MCF 10A (cell line): ENCODE measurements at regions of chr16 and their contacts with region 1.

Region 1: DNA sequence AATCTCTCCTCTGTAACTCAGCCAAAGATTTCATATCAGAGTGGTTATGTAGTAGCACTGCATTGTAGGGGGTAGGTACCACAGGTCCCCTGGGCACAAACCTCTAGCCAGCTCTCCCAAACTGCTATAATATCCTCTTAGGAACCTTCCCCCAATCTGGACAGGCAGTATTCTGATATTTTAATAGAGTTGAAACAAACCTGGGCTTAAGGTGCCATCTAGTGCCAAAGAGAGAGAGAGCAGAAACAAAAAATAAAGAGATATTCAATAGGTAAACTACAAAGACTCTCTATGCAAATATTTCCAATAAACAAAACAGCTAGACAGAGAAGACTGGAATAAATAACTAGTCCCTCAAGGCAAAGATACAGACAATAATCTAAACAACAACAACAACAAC is 1070.0 kb downstream of the CDH11 start:
- DNase-seq: peak; percentile 42
- H3K4me3 Mint-ChIP-seq: no peak overlapping the region
- H3K27ac Mint-ChIP-seq: no peak overlapping the region
- H3K4me1 Mint-ChIP-seq: no peaks in the 10 kb centered on the region
- H3K27me3 Mint-ChIP-seq: no peaks in the 10 kb centered on the region
- CTCF ChIP-seq: peak; percentile 43

Region 2: GRCh38 chr16:62225697-62226280 is 1826.0 kb before region 1 on chr16:
- CTCF ChIA-PET with region 1: interaction called, 3 read pairs
- POLR2A ChIA-PET with region 1: no interaction called
- intact Hi-C with region 1: loop called (anchors 5 kb)
- DNase-seq: peak; percentile 81
- H3K4me3 Mint-ChIP-seq: peak overlapping the region; percentile 19
- H3K27ac Mint-ChIP-seq: no peak overlapping the region
- H3K4me1 Mint-ChIP-seq: no peaks in the 10 kb centered on the region
- H3K27me3 Mint-ChIP-seq: no peaks in the 10 kb centered on the region
- CTCF ChIP-seq: peak; percentile 29

Region 3: DNA sequence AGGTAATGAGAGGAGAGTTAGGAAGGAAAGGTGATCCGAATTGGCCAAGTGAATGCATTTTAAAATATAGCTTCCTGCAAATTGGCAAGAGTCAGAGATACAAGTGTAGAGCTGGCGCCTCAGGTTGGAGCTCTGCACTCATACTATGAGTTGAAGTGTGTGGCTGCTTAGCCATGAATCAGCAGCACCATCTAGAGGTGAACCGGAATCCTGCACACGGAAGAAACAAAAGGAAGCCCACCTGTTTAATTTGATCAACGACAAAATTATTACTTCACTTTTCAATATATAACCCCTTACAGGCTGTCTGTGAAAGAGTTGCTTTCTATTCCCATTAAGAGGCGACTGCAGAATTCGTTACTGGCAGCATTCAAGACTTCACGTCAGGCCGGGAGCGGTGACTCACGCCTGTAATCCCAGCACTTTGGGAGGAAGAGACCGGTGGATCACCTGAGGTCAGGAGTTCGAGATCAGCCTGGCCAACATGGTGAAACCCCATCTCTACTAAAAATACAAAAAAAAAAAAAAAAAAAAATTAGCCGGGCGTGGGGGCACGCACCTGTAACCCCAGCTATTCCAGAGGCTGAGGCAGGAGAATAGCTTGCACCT is 761.9 kb before region 1 on chr16:
- CTCF ChIA-PET with region 1: no interaction called
- POLR2A ChIA-PET with region 1: no interaction called
- intact Hi-C with region 1: loop called (anchors 5 kb)
- DNase-seq: peak; percentile 53
- H3K4me3 Mint-ChIP-seq: no peak overlapping the region
- H3K27ac Mint-ChIP-seq: no peak overlapping the region
- H3K4me1 Mint-ChIP-seq: no peaks in the 10 kb centered on the region
- H3K27me3 Mint-ChIP-seq: no peaks in the 10 kb centered on the region
- CTCF ChIP-seq: peak; percentile 66

Region 4: GRCh38 chr16:63361032-63361624 is 690.7 kb before region 1 on chr16:
- CTCF ChIA-PET with region 1: interaction called, 4 read pairs
- POLR2A ChIA-PET with region 1: no interaction called
- intact Hi-C with region 1: loop called (anchors 1 kb)
- DNase-seq: peak; percentile 67
- H3K4me3 Mint-ChIP-seq: no peak overlapping the region
- H3K27ac Mint-ChIP-seq: no peak overlapping the region
- H3K4me1 Mint-ChIP-seq: peaks cover 6% of the 10 kb centered on the region
- H3K27me3 Mint-ChIP-seq: no peaks in the 10 kb centered on the region
- CTCF ChIP-seq: peak; percentile 71

Region 5: GRCh38 chr16:63461248-63461841 is 590.5 kb before region 1 on chr16:
- CTCF ChIA-PET with region 1: interaction called, 66 read pairs
- POLR2A ChIA-PET with region 1: interaction called, 3 read pairs
- intact Hi-C with region 1: loop called (anchors 1 kb)
- DNase-seq: peak; percentile 58
- H3K4me3 Mint-ChIP-seq: no peak overlapping the region
- H3K27ac Mint-ChIP-seq: no peak overlapping the region
- H3K4me1 Mint-ChIP-seq: no peaks in the 10 kb centered on the region
- H3K27me3 Mint-ChIP-seq: no peaks in the 10 kb centered on the region
- CTCF ChIP-seq: peak; percentile 33

Region 6: DNA sequence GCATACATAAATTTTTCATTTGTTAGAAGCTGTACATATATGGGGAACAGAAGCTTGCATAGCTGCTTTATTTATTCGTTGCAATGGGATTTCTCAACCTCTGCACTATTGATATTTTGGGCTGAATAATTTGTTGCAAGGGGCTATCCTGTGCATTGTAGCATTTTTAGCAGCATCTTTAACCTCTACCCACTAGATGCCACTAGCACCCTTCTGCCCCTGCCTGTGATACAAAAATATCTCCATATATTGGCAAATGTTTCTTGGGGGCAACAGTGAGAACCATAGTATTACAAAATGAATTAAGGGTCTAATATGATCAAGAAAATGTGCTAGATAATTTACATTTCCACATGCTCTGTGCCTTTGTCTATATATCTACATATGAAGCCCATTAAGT is 331.0 kb before region 1 on chr16:
- CTCF ChIA-PET with region 1: interaction called, 19 read pairs
- POLR2A ChIA-PET with region 1: no interaction called
- intact Hi-C with region 1: loop called (anchors 10 kb)
- DNase-seq: no peak
- H3K4me3 Mint-ChIP-seq: no peak overlapping the region
- H3K27ac Mint-ChIP-seq: no peak overlapping the region
- H3K4me1 Mint-ChIP-seq: no peaks in the 10 kb centered on the region
- H3K27me3 Mint-ChIP-seq: no peaks in the 10 kb centered on the region
- CTCF ChIP-seq: no peak

Region 7: DNA sequence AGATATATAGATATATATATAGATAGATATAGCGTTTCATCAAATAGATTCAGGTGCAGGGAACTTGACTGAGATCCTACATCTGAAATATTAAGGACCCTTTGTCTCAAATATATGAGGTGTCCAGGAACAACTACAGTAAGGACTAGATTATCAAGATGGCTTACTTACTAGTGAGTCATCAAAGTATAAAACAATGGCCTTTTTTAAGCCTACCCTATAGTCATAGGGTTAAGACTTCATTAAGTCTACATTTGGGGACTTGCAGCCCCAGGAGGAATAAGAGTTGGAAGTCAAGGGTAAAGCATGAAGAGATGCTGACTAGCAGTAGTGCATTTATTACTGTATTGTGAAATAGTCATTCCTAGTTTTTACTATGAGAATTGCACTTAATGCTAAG is 46.6 kb after region 1 on chr16:
- CTCF ChIA-PET with region 1: no interaction called
- POLR2A ChIA-PET with region 1: no interaction called
- intact Hi-C with region 1: no loop called
- DNase-seq: no peak
- H3K4me3 Mint-ChIP-seq: no peak overlapping the region
- H3K27ac Mint-ChIP-seq: no peak overlapping the region
- H3K4me1 Mint-ChIP-seq: no peaks in the 10 kb centered on the region
- H3K27me3 Mint-ChIP-seq: no peaks in the 10 kb centered on the region
- CTCF ChIP-seq: no peak

Region 8: GRCh38 chr16:64455254-64455653 is 403.4 kb after region 1 on chr16:
- CTCF ChIA-PET with region 1: no interaction called
- POLR2A ChIA-PET with region 1: no interaction called
- intact Hi-C with region 1: loop called (anchors 2 kb)
- DNase-seq: peak; percentile 23
- H3K4me3 Mint-ChIP-seq: no peak overlapping the region
- H3K27ac Mint-ChIP-seq: no peak overlapping the region
- H3K4me1 Mint-ChIP-seq: peaks cover under 1% of the 10 kb centered on the region
- H3K27me3 Mint-ChIP-seq: no peaks in the 10 kb centered on the region
- CTCF ChIP-seq: peak; percentile 23